ENCODE measurements at regions of chr20 and their contacts with region 1.

Region 1: DNA sequence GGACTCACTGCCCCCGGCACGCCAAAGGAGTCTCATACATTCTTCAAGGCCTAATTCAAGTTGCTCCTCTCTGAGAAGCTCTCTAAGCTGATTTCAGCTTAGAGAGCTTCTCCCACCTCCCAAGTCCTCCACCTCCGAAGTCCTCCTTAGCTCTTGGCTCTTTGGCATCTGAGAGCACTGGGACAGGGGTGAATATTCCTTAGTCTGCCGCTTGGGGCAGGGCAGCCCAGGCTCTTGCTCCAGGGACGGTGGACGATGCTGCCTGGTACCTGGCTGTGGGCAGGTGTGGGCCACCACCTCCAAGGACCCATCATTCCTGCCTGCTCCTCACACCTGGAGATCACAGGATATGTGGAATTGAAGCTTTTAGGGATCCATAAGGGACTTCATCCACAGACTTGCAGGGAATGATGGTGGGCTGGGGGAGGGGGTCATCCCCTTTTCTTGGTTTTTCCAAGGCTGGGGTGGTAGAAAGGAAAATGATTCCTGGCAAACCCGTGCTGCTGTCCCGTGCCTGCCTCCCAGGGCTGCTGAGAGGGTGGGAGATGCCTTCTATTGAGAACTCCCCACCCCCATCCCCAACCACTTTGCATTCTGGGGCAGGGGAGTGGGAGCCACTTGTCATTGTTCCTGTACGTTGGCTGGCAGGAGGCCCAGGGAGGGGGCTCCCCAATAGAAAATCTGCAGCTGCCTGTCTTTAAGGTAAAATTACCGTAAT is 57.4 kb downstream of the ARHGAP40 start:
- DNase-seq: peak; percentile 64
- CTCF ChIP-seq: peak; percentile 59

Region 2: GRCh38 chr20:38907918-38908677 is 249.1 kb after region 1 on chr20:
- in situ Hi-C with region 1: loop called (anchors 10 kb)
- DNase-seq: no peak
- CTCF ChIP-seq: no peak